Common myeloid progenitor, CD34-positive (primary cell): ENCODE measurements at regions of chr5 and their contacts with region 1.

Region 1: DNA sequence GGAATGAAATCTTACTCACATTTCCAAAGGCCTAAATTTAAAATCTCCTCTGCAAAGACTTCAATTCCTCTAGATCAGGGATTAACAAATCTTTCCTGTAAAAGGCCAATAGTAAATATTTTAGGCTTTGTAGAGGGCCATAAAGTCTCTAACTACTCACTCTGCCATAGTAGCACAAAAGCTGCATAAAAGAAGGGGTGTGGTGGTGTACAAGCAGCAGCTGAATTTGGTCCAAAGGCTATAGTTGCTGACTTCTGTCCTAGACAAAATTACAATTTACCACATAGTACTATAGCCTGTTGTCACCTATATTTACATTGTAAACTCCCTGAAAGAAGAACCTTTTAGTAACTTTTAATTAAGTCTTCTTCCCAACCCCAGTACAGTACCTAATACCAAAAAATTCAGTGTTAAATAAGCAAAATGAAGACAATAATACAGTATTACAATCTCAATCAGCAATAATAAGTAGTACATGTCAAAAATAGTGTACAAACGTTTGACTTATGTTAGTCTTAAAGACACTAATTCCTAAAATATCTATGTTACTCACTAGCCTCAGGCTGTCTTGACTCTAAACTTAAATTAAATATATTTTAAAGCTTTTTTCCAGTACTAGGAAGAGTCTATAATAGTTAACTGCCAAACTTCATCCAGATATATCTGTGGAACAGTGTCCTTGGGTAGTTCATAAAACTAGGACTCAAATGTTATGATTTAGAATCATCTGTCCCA is 6.9 kb downstream of the CETN3 start:
- DNase-seq: no peak
- H3K4me3 ChIP-seq: no peak overlapping the region
- H3K27ac ChIP-seq: no peak overlapping the region
- H3K4me1 ChIP-seq: peaks cover 0 to 2% (median 0%) of the 10 kb centered on the region in 4 experiments
- H3K27me3 ChIP-seq: no peaks in the 10 kb centered on the region

Region 2: DNA sequence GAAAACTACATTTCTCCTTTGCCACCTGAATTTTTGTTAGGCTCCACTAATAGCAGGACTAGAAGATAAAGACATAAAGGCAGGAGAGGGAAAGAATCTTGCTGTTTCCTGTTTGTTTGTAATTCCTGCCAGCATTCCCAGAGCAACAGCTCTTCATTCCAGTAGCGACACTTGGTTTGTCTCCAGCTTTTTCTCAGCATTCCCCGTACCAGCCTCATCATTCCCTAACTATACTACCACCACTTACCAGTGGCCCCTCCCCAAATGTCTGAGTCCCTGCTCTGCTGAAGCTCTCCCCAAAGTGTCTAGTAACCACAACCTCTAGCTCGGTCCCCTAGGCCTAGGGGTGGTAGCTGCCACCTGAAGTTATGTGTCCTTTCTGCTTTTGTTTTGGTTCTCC is 11.8 kb before region 1 on chr5:
- CTCF ChIA-PET with region 1: interaction called, 12 read pairs
- POLR2A ChIA-PET with region 1: no interaction called
- DNase-seq: no peak
- H3K4me3 ChIP-seq: no peak overlapping the region
- H3K27ac ChIP-seq: no peak overlapping the region
- H3K4me1 ChIP-seq: no peaks in the 10 kb centered on the region
- H3K27me3 ChIP-seq: no peaks in the 10 kb centered on the region

Region 3: GRCh38 chr5:90571147-90571773 is 168.6 kb after region 1 on chr5:
- CTCF ChIA-PET with region 1: no interaction called
- POLR2A ChIA-PET with region 1: no interaction called
- DNase-seq: no peak
- H3K4me3 ChIP-seq: no peak overlapping the region
- H3K27ac ChIP-seq: no peak overlapping the region
- H3K4me1 ChIP-seq: no peaks in the 10 kb centered on the region
- H3K27me3 ChIP-seq: no peaks in the 10 kb centered on the region